Gastrocnemius medialis (tissue), 4 donors: ENCODE measurements at regions of chr15 and their contacts with region 1.

Region 1: GRCh38 chr15:26260517-26261133 is 397.5 kb upstream of the ATP10A start:
- DNase-seq: no peak
- ATAC-seq: no peak
- H3K4me3 ChIP-seq: no peak overlapping the region
- H3K27ac ChIP-seq: no peak overlapping the region
- H3K4me1 ChIP-seq: no peaks in the 10 kb centered on the region
- H3K27me3 ChIP-seq: no peaks in the 10 kb centered on the region
- CTCF ChIP-seq: peak in 3 of 5 experiments; percentile 27 to 50 (median 33)
- POLR2A ChIP-seq: no peak

Region 2: GRCh38 chr15:26037369-26037768 is 223.3 kb before region 1 on chr15:
- in situ Hi-C with region 1: loop called in 1 of 4 experiments (anchors 25 kb)
- intact Hi-C with region 1: no loop called
- DNase-seq: no peak
- ATAC-seq: no peak
- H3K4me3 ChIP-seq: no peak overlapping the region
- H3K27ac ChIP-seq: no peak overlapping the region
- H3K4me1 ChIP-seq: no peaks in the 10 kb centered on the region
- H3K27me3 ChIP-seq: no peaks in the 10 kb centered on the region
- CTCF ChIP-seq: no peak
- POLR2A ChIP-seq: no peak

Region 3: DNA sequence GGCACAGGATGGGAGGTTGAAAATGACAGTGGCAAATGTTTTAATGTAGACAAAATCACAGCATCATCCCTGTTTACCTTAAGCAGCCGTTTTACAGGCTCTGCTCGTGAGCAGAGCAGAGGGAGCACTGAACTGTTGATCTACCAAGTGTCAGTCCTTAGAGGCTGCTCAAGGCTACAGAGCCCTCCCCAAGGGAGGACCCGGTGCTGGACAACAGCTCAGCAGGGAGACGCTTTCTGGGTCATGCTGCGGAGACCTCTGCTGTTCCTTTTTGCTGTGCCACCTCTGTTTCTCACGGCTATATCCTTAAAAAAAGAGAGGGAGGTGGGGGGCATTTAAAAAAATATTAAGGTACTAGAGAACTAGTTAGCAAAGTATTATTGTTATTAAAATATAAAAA is 112.1 kb after region 1 on chr15:
- in situ Hi-C with region 1: no loop called
- intact Hi-C with region 1: no loop called
- DNase-seq: no peak
- ATAC-seq: no peak
- H3K4me3 ChIP-seq: no peak overlapping the region
- H3K27ac ChIP-seq: no peak overlapping the region
- H3K4me1 ChIP-seq: no peaks in the 10 kb centered on the region
- H3K27me3 ChIP-seq: no peaks in the 10 kb centered on the region
- CTCF ChIP-seq: no peak
- POLR2A ChIP-seq: no peak

Region 4: DNA sequence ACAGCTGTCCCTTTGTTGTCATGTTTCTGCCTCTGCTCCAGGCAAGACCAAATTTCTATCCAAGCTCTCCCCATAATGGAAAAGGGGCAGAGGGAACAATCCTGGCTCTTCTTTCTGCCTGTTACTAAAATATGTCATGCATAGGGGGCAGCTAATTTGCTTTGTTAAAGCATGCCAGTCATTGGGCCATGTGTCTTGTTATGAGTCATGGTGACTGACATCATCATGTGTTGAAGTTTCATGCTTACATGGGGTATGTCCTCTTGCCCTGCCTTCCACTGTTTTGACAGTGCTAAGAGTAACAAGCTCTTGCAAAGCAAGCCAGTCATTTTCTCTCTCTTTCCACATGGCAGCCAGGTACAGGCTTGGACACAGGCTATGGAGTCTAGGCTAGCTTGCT is 243.4 kb after region 1 on chr15:
- in situ Hi-C with region 1: no loop called
- intact Hi-C with region 1: no loop called
- DNase-seq: no peak
- ATAC-seq: no peak
- H3K4me3 ChIP-seq: no peak overlapping the region
- H3K27ac ChIP-seq: no peak overlapping the region
- H3K4me1 ChIP-seq: no peaks in the 10 kb centered on the region
- H3K27me3 ChIP-seq: no peaks in the 10 kb centered on the region
- CTCF ChIP-seq: no peak
- POLR2A ChIP-seq: no peak

Region 5: DNA sequence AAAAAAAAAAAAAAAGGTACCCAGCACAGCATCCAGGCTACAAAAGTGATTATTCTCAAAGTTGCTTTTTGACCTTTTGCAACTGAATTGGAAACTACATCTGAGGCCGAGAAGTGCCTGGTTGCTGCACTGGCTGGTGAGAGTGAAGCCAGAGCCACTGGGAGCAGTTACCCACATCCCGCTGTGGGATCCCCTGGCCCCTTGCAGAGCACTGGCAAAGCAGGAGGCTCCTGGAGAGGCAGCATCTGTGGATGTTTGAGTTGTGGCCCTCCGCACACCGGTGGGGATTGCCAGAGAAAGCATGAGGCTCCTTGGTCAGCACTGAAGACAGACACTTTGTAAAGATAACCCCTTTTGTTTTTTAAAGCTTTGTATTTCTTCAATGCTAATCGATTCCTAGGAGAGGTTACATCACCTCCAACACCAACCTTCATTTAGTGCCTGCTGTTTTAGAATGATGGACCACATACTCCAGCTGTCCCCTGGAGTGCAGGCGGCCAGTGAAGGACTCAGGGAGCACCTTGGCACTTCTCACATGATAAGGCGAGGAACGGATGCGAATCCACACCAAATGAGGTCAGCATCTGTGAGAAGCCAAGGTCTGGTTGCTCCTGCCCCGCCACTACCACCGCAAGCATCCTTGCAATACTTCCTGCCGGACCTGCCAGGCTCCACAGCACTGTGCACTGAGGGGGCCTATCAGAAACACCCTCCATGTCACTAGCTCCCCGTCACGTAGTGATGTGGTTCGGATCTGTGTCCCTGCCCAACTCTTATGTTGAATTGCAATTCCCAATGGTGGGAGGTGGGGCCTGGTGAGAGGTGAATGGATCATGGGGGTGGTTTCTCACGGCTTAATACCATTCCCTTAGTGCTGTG is 255.7 kb after region 1 on chr15:
- in situ Hi-C with region 1: no loop called
- intact Hi-C with region 1: no loop called
- DNase-seq: no peak
- ATAC-seq: no peak
- H3K4me3 ChIP-seq: no peak overlapping the region
- H3K27ac ChIP-seq: no peak overlapping the region
- H3K4me1 ChIP-seq: no peaks in the 10 kb centered on the region
- H3K27me3 ChIP-seq: no peaks in the 10 kb centered on the region
- CTCF ChIP-seq: no peak
- POLR2A ChIP-seq: no peak